Activated CD4-positive, alpha-beta memory T cell treated with anti-CD3 and anti-CD28 coated beads, Interleukin-2, amount 10 ng/mL, durations not matched to agents 7 days and 5 days (primary cell): ENCODE measurements at regions of chr18 and their contacts with region 1.

Region 1: GRCh38 chr18:32552421-32553030 is 81.8 kb upstream of the GAREM1 start:
- DNase-seq: peak; percentile 48
- H3K4me3 Mint-ChIP-seq: no peak overlapping the region
- H3K27ac Mint-ChIP-seq: no peak overlapping the region
- H3K4me1 Mint-ChIP-seq: no peaks in the 10 kb centered on the region
- H3K27me3 Mint-ChIP-seq: peaks cover 1% of the 10 kb centered on the region

Region 2: GRCh38 chr18:32158108-32158624 is 394.4 kb before region 1 on chr18:
- CTCF ChIA-PET with region 1: interaction called, 48 read pairs
- POLR2A ChIA-PET with region 1: interaction called, 3 read pairs
- DNase-seq: peak; percentile 76
- H3K4me3 Mint-ChIP-seq: peak overlapping the region; percentile 38
- H3K27ac Mint-ChIP-seq: no peak overlapping the region
- H3K4me1 Mint-ChIP-seq: peaks cover 7% of the 10 kb centered on the region
- H3K27me3 Mint-ChIP-seq: peaks cover 14% of the 10 kb centered on the region

Region 3: DNA sequence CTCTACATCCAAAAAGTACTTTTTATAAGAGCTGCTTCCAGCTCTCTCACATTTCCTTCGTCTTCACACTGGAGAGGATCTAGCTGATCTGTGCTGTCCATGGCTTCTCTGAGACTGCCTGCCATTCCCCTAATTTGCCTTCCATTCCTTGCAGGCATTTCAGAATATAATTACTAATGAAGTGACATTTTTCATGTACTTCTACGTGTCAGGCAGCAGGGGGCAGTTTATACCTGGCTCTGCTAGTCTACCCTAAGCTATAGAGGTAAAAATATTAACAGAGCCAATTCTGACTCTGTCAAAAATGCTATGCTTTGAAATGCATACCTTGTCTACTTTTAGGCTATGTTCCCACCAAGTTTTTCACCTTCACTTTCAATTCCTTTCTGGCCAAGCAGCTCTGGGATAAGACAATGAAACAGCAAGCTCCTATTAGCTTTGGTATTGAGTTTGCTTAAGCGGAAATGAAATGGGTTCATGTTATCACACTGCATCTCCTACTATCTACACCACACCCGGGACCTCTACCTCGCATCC is 280.8 kb before region 1 on chr18:
- CTCF ChIA-PET with region 1: interaction called, 22 read pairs
- POLR2A ChIA-PET with region 1: no interaction called
- DNase-seq: no peak
- H3K4me3 Mint-ChIP-seq: no peak overlapping the region
- H3K27ac Mint-ChIP-seq: no peak overlapping the region
- H3K4me1 Mint-ChIP-seq: no peaks in the 10 kb centered on the region
- H3K27me3 Mint-ChIP-seq: peaks cover 7% of the 10 kb centered on the region

Region 4: GRCh38 chr18:32349728-32350395 is 202.7 kb before region 1 on chr18:
- CTCF ChIA-PET with region 1: no interaction called
- POLR2A ChIA-PET with region 1: no interaction called
- DNase-seq: no peak
- H3K4me3 Mint-ChIP-seq: no peak overlapping the region
- H3K27ac Mint-ChIP-seq: no peak overlapping the region
- H3K4me1 Mint-ChIP-seq: no peaks in the 10 kb centered on the region
- H3K27me3 Mint-ChIP-seq: peaks cover 11% of the 10 kb centered on the region

Region 5: GRCh38 chr18:32851936-32852335 is 299.4 kb after region 1 on chr18:
- CTCF ChIA-PET with region 1: no interaction called
- POLR2A ChIA-PET with region 1: no interaction called
- DNase-seq: no peak
- H3K4me3 Mint-ChIP-seq: no peak overlapping the region
- H3K27ac Mint-ChIP-seq: no peak overlapping the region
- H3K4me1 Mint-ChIP-seq: no peaks in the 10 kb centered on the region
- H3K27me3 Mint-ChIP-seq: no peaks in the 10 kb centered on the region